ENCODE measurements at regions of chr2 and their contacts with region 1.

Region 1: GRCh38 chr2:190804182-190804795 is 76.3 kb upstream of the GLS start:
- DNase-seq: no peak
- H3K4me3 Mint-ChIP-seq: no peak overlapping the region
- H3K27ac Mint-ChIP-seq: no peak overlapping the region
- H3K4me1 Mint-ChIP-seq: peaks cover 9% of the 10 kb centered on the region
- H3K27me3 Mint-ChIP-seq: no peaks in the 10 kb centered on the region

Region 2: DNA sequence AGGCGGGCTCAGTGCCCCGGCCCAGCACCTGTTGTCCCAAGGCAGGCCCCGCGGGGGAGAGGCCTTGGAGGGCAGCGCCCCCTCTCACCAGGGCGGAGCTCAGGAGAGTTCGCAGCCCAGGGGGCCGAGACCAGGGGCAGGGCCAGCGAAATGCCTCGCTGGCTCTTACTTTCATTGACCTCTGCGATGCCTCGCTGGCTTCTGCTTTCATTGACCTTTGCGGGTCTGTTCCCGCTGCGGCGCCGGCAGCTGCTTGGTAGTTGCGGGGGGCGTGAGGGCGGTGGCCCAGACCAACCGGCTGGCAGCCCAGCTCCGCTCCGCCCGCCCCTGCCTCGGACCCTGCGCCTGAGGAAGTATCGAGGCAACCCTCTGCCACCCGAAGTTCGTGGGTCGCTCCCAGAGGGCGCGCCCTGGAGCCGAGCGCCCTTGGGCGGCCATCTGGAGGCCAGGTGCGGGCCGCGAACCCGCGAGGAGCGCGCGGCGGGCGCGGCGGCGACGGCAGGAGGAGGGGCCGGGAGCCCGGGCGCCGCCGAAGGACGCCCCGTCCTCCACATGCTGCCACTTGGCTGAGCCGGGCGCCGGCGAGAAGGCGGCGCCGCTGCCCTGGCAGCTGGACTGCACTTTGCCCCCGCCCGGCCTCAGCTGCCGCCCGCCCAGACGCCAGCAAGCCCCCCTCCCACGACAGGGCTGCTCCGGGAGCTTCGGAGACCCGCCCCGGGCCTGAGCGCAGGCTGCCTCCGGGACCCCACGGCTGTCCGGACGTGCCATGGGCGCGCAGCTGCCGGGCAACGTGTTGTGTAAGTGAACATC is 623.8 kb before region 1 on chr2:
- CTCF ChIA-PET with region 1: no interaction called
- POLR2A ChIA-PET with region 1: no interaction called
- intact Hi-C with region 1: loop called (anchors 5 kb)
- DNase-seq: peak; percentile 32
- H3K4me3 Mint-ChIP-seq: no peak overlapping the region
- H3K27ac Mint-ChIP-seq: no peak overlapping the region
- H3K4me1 Mint-ChIP-seq: peaks cover 6% of the 10 kb centered on the region
- H3K27me3 Mint-ChIP-seq: peaks cover 19% of the 10 kb centered on the region

Region 3: DNA sequence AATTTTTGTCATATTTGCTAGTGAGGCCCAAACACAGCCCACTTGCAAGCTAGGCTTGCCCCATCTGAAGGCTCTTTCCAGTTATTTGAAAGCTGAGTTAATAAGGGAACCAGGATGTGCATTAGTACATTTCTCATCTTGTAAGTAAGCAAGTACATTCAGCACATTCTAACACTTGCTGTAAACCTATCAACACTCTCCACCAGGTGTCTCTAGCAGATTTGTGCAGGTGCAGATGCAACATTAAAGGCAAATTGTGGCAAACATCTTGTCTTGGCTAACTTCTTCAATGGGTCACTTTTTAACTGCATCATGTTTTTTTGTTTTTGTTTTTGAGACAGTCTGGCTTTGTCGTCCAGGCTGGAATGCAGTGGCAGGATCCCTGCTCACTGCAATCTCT is 421.4 kb before region 1 on chr2:
- CTCF ChIA-PET with region 1: interaction called, 5 read pairs
- POLR2A ChIA-PET with region 1: no interaction called
- intact Hi-C with region 1: loop called (anchors 2 kb)
- DNase-seq: no peak
- H3K4me3 Mint-ChIP-seq: no peak overlapping the region
- H3K27ac Mint-ChIP-seq: no peak overlapping the region
- H3K4me1 Mint-ChIP-seq: peaks cover 4% of the 10 kb centered on the region
- H3K27me3 Mint-ChIP-seq: no peaks in the 10 kb centered on the region

Region 4: DNA sequence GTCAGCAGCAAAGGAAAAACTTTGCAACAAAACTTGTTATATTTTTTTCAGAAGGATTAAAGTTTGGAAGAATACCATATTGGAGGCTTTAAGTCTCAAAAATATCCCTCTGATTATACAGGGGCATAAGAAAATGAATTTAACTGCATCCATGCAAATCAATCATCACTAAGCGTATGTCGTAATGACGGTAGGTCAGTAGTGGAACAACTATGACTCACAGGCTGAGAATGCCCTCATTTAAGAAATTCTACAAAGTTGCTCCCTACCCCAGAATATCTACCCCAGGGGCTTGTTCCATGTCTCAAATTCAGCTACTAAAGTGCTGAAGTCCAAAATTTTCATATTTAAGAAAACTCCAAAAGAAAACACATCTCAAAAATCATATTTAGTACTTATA is 167.9 kb before region 1 on chr2:
- CTCF ChIA-PET with region 1: interaction called, 5 read pairs
- POLR2A ChIA-PET with region 1: no interaction called
- intact Hi-C with region 1: loop called (anchors 5 kb)
- DNase-seq: no peak
- H3K4me3 Mint-ChIP-seq: no peak overlapping the region
- H3K27ac Mint-ChIP-seq: no peak overlapping the region
- H3K4me1 Mint-ChIP-seq: peaks cover 10% of the 10 kb centered on the region
- H3K27me3 Mint-ChIP-seq: no peaks in the 10 kb centered on the region

Region 5: GRCh38 chr2:190781604-190782198 is 22.6 kb before region 1 on chr2:
- CTCF ChIA-PET with region 1: interaction called, 50 read pairs
- POLR2A ChIA-PET with region 1: interaction called, 4 read pairs
- intact Hi-C with region 1: loop called (anchors 1 kb)
- DNase-seq: peak; percentile 66
- H3K4me3 Mint-ChIP-seq: no peak overlapping the region
- H3K27ac Mint-ChIP-seq: no peak overlapping the region
- H3K4me1 Mint-ChIP-seq: peaks cover 22% of the 10 kb centered on the region
- H3K27me3 Mint-ChIP-seq: peaks cover 9% of the 10 kb centered on the region